ENCODE measurements at regions of chr9 and their contacts with region 1.

Region 1: DNA sequence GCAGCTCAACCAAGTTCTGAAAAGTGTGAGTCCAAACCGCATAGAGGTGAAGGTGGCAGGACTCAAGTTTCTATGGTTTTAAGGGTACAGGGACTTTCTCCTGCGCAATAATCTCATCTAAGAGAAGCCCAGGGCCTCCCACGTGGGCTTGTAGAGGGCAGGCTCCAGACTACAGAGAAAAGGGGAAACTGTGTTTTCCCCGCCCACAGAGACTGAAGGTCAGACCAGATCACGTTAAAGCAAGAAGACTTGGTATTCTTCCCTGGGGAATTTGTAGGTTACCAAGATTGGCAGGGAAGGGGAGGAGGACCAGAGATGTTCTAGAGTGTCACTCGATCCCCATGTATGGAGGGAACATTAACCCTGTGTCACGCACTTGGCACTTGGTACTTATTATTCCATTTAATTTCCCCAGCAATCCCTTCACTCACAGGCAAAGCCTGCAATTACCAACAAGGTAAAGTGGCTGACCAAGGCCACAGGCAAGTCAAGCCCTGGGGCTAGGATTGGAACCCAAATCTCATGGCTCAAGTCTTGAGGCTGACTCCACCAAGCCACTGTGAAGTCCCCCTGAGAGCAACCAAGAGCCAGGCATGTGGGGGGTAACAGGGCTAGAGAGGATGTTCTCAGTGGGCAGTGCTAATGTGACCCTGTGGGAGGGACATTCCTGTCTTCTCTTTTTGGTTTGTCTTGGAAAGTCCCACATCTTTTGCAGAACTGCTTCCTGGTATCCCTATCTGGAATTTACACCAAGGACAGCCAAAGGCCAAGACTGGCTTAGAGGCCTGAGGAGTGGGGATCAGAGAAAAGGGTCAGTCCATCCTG is 18.3 kb upstream of the NEK6 start:
- DNase-seq: peak; percentile 72
- ATAC-seq: peak; percentile 95
- H3K4me3 ChIP-seq: no peak overlapping the region
- H3K27ac ChIP-seq: peak overlapping the region; percentile 89
- H3K4me1 ChIP-seq: peaks cover 39% of the 10 kb centered on the region
- H3K27me3 ChIP-seq: no peaks in the 10 kb centered on the region
- CTCF ChIP-seq: no peak
- EP300 ChIP-seq: peak; percentile 37 to 52; a peak in 2 of 4 replicates
- POLR2A ChIP-seq: no peak
- RAD21 ChIP-seq: no peak

Region 2: GRCh38 chr9:124210697-124211096 is 28.8 kb before region 1 on chr9:
- CTCF ChIA-PET with region 1: interaction called, 5 read pairs
- POLR2A ChIA-PET with region 1: interaction called, 4 read pairs
- RAD21 ChIA-PET with region 1: interaction called, 84 read pairs
- SMC1A ChIA-PET with region 1: interaction called, 11 read pairs
- in situ Hi-C with region 1: no loop called
- intact Hi-C with region 1: no loop called
- DNase-seq: peak; percentile 69
- ATAC-seq: peak; percentile 87
- H3K4me3 ChIP-seq: no peak overlapping the region
- H3K27ac ChIP-seq: peak overlapping the region; percentile 57
- H3K4me1 ChIP-seq: peaks cover 72% of the 10 kb centered on the region
- H3K27me3 ChIP-seq: no peaks in the 10 kb centered on the region
- CTCF ChIP-seq: no peak
- EP300 ChIP-seq: peak; percentile 55 to 81; a peak in 2 of 4 replicates
- POLR2A ChIP-seq: no peak
- RAD21 ChIP-seq: no peak; the same call in 1 of the 2 replicates

Region 3: DNA sequence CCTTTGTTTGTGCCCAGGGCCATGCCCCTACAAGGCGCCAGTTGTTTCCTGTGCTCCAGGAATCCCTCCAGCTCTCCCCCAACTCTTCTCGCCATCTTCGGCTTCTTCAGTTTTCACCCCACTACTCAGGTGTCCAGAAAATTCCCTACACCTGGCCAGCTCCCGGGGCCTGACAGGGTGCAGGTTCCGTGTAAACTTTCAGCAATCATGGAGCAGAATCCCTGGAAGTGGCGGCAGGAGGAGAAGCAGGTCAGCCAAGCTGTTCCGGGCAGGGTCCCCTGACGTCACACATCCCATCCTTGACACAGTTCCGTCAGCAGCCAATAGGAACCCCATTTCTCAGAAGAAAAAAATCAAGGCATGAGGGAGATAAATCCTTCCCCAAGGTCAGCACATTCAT is 198.6 kb after region 1 on chr9:
- CTCF ChIA-PET with region 1: no interaction called
- POLR2A ChIA-PET with region 1: interaction called, 10 read pairs
- RAD21 ChIA-PET with region 1: no interaction called
- SMC1A ChIA-PET with region 1: no interaction called
- in situ Hi-C with region 1: no loop called
- intact Hi-C with region 1: no loop called
- DNase-seq: no peak
- ATAC-seq: no peak
- H3K4me3 ChIP-seq: no peak overlapping the region
- H3K27ac ChIP-seq: no peak overlapping the region
- H3K4me1 ChIP-seq: peaks cover 9% of the 10 kb centered on the region
- H3K27me3 ChIP-seq: no peaks in the 10 kb centered on the region
- CTCF ChIP-seq: no peak
- EP300 ChIP-seq: no peak
- POLR2A ChIP-seq: no peak
- RAD21 ChIP-seq: no peak

Measured in GM12878 (cell line).